Activated CD4-positive, alpha-beta memory T cell treated with anti-CD3 and anti-CD28 coated beads for 36 hours (primary cell): ENCODE measurements at regions of chr19 and their contacts with region 1.

Region 1: DNA sequence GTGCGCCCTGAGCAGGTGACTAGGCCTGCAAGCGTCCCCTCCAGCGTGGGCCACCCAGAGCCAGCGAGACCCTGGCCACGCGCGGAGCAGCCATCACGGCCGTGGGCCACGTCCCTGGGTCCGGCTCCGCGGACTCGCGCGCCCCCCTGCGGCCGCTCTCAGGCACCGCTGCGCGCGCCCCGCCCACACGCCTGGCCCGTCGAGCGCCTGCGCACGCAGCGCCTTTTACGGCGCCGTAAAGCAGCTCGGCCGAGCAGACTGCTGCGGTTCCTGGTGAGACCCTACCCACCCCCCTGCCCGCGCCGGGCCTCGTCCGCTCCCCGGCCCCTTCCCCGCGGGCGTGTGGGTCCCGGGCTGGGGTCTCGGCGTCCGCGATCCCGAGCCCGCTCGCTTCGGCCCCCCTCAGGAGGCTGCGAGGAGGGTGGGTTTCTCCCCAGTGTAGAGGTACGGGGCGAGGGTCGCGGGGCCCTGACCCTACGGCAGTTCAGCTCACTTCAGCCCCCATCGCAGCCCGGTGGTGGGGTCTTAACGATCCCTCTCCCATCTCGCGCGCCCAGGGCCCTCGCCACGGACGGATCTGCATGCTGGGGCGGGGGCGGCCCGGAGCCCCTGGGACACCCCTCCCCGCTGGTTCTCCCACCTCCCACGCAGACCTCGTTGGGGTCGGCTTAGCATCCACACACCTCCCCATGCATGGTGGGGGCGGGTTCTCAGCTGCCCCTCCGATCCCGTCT is at the start of gene TRAPPC5:
- DNase-seq: peak; percentile 91
- H3K4me3 Mint-ChIP-seq: peak within 1 kb of the TSS; percentile 88
- H3K27ac Mint-ChIP-seq: peak within 1 kb of the TSS; percentile 91
- H3K4me1 Mint-ChIP-seq: peaks cover 44% of the 10 kb centered on the region
- H3K27me3 Mint-ChIP-seq: peaks cover 23% of the 10 kb centered on the region
- total RNA-seq, gene TRAPPC5: 77.5 to 88.2 TPM

Region 2: GRCh38 chr19:7629347-7630054 is 51.3 kb before region 1 on chr19 and contains the starts of genes PET100 and XAB2:
- CTCF ChIA-PET with region 1: interaction called, 14 read pairs
- POLR2A ChIA-PET with region 1: interaction called, 10 read pairs
- intact Hi-C with region 1: no loop called
- DNase-seq: peak; percentile 97
- H3K4me3 Mint-ChIP-seq: peak within 1 kb of the TSS; percentile 96
- H3K27ac Mint-ChIP-seq: peak within 1 kb of the TSS; percentile 93
- H3K4me1 Mint-ChIP-seq: peaks cover 33% of the 10 kb centered on the region
- H3K27me3 Mint-ChIP-seq: no peaks in the 10 kb centered on the region
- total RNA-seq, gene PET100: 106 to 114 TPM
- total RNA-seq, gene XAB2: 50.0 to 52.4 TPM

Region 3: GRCh38 chr19:7652061-7652641 is 28.6 kb before region 1 on chr19:
- CTCF ChIA-PET with region 1: interaction called, 33 read pairs
- POLR2A ChIA-PET with region 1: no interaction called
- intact Hi-C with region 1: loop called (anchors 1 kb)
- DNase-seq: peak; percentile 92
- H3K4me3 Mint-ChIP-seq: peak overlapping the region; percentile 49
- H3K27ac Mint-ChIP-seq: peak overlapping the region; percentile 49
- H3K4me1 Mint-ChIP-seq: peaks cover 12% of the 10 kb centered on the region
- H3K27me3 Mint-ChIP-seq: no peaks in the 10 kb centered on the region

Region 4: GRCh38 chr19:7705387-7706187 is 24.8 kb after region 1 on chr19:
- CTCF ChIA-PET with region 1: interaction called, 26 read pairs
- POLR2A ChIA-PET with region 1: no interaction called
- intact Hi-C with region 1: loop called (anchors 1 kb)
- DNase-seq: peak; percentile 91
- H3K4me3 Mint-ChIP-seq: peak overlapping the region; percentile 30
- H3K27ac Mint-ChIP-seq: peak overlapping the region; percentile 61
- H3K4me1 Mint-ChIP-seq: peaks cover 30% of the 10 kb centered on the region
- H3K27me3 Mint-ChIP-seq: peaks cover 3% of the 10 kb centered on the region

Region 5: DNA sequence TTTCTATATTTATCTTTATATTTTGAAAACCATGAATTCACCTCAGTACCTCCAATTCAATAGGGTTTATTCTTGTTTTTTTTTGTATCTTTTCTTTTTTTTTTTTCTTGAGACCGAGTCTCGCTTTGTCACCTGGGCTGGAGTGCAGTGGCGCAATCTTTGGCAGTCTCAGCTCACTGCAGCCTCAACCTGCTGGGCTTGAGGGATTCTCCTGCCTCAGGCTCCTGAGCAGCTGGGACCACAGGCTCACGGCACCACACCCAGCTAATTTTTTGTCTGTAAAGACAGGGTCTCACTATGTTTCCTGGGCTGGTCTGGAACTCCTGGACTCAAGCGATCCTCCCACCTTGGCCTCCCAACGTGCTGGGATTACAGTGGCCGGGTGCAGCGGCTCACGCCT is 126.1 kb after region 1 on chr19:
- CTCF ChIA-PET with region 1: interaction called, 62 read pairs
- POLR2A ChIA-PET with region 1: no interaction called
- intact Hi-C with region 1: loop called (anchors 2 kb)
- DNase-seq: no peak
- H3K4me3 Mint-ChIP-seq: no peak overlapping the region
- H3K27ac Mint-ChIP-seq: no peak overlapping the region
- H3K4me1 Mint-ChIP-seq: peaks cover 12% of the 10 kb centered on the region
- H3K27me3 Mint-ChIP-seq: peaks cover 49% of the 10 kb centered on the region